Gastrocnemius medialis (tissue), 4 donors: ENCODE measurements at regions of chr3 and their contacts with region 1.

Region 1: DNA sequence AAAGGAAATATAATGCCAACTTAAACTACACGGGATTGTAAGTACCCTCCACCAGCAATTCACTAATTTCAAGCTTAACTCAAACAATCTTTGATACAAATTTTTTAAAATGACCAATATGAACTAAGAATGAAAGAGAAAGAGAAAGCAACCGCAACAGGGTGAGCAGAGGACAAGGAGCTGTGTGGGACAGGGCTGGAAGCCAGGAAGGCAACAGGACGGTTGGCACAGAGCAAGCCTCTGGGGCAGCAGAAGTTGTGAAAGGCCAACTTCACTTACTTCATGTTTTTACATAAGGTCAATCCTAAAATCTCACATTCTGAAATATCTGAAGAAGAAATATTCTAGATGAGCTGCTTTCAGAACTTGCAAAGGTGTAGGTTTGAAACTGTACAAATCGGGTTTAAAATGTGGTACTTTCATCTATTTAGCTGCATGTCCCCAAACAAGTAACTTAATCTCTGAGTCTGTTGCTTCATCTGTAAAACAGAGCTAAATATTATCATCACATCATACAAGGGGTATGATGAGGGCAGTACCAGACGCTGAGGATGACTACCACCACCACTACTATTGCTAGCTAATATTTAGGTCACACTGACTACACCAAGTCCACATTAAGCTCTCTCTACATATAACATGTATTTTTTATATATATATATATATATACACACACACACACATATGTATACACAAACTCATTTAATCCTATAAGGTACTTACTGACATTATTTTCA is 101.7 kb downstream of the IGSF11 start:
- DNase-seq: peak; percentile 65 to 91
- ATAC-seq: peak; percentile 93 to 96
- H3K4me3 ChIP-seq: peak overlapping the region; percentile 31 to 56 (median 50)
- H3K27ac ChIP-seq: peak overlapping the region; percentile 83 to 91 (median 89)
- H3K4me1 ChIP-seq: peaks cover 44 to 46% of the 10 kb centered on the region in 2 donors
- H3K27me3 ChIP-seq: no peaks in the 10 kb centered on the region
- CTCF ChIP-seq: no peak
- POLR2A ChIP-seq: peak in 1 of 2 donors; percentile 51

Region 2: DNA sequence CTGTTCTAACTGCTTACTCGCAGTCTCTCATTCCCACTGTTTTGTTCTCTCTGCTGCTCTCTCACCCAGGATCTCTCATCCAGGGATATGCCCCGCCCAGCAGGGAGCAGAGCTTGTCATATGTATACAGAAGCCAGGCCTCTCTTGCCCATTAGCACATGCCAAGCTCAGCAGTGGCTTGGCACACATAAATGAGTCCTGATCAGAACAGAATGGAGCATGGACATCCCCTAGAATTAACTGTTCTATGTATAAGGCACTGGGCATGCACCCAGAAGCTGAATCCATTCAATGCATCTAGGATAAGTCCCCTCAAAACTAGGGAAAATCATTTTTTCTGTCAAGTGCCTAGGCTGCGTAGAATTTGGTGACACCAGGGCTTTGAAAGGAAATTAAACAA is 40.1 kb after region 1 on chr3:
- in situ Hi-C with region 1: no loop called
- intact Hi-C with region 1: loop called (anchors 5 kb)
- DNase-seq: no peak
- ATAC-seq: peak in 1 of 2 donors; percentile 25
- H3K4me3 ChIP-seq: no peak overlapping the region
- H3K27ac ChIP-seq: no peak overlapping the region
- H3K4me1 ChIP-seq: peaks cover 20 to 25% of the 10 kb centered on the region in 2 donors
- H3K27me3 ChIP-seq: no peaks in the 10 kb centered on the region
- CTCF ChIP-seq: no peak
- POLR2A ChIP-seq: no peak

Region 3: GRCh38 chr3:119018690-119019463 is 85.9 kb after region 1 on chr3:
- in situ Hi-C with region 1: no loop called
- intact Hi-C with region 1: loop called (anchors 5 kb)
- DNase-seq: peak; percentile 30 to 67
- ATAC-seq: peak; percentile 92 to 96
- H3K4me3 ChIP-seq: no peak overlapping the region
- H3K27ac ChIP-seq: peak overlapping the region; percentile 0 to 49 (median 14)
- H3K4me1 ChIP-seq: peaks cover 4 to 5% of the 10 kb centered on the region in 2 donors
- H3K27me3 ChIP-seq: no peaks in the 10 kb centered on the region
- CTCF ChIP-seq: no peak
- POLR2A ChIP-seq: no peak

Region 4: DNA sequence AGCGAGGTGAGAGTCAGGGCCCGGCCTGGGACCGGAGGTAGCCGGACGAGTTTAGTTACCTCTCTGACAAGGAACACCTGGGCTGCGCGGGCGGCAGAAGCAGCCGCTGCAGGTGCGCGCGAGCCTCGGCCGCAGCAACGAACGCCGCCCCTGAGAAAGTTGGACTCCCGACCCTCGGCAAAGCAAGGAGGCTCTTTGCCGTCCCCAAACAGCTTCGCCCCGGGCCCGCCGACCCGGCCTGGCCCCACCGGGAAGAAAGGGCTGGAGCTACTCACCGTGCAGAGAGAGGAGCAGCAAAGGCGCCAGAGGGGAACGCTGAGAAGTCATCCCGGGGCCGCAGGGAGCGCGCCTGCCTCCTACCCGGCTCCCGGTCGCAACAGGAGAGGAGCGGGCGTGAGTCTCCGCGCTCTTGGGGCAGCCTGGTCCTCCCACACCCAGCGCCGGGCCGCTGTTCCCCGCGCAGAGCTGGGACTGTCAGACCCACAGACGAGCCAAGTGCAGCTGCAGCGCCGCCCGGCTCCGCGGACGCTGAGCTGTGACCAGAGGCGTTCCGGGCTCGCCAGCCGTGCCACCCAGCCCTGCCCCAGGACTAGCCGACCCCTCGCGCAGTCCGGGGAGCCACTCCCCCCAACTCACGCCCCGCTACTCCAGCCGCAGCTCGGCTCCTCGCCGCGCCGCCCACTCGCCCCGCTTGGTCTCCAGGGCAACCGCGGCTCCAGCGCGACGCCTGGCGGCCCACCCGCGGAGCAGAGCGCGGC is 101.4 kb after region 1 on chr3 and contains the start of gene IGSF11:
- in situ Hi-C with region 1: no loop called
- intact Hi-C with region 1: loop called (anchors 2 kb)
- DNase-seq: peak; percentile 16 to 71
- ATAC-seq: peak; percentile 92 to 94
- H3K4me3 ChIP-seq: peak within 1 kb of the TSS; percentile 68 to 76 (median 72)
- H3K27ac ChIP-seq: peak within 1 kb of the TSS; percentile 63 to 77 (median 68)
- H3K4me1 ChIP-seq: peaks cover 0 to 5% of the 10 kb centered on the region in 2 donors
- H3K27me3 ChIP-seq: peaks cover 0 to 2% (median 0%) of the 10 kb centered on the region in 3 donors
- CTCF ChIP-seq: peak in 4 of 5 experiments; percentile 77 to 86 (median 82)
- POLR2A ChIP-seq: peak in 1 of 2 donors; percentile 39
- total RNA-seq, gene IGSF11: 4.7 to 11.5 (median 8.6) TPM

Region 5: GRCh38 chr3:119257682-119258410 is 324.9 kb after region 1 on chr3:
- in situ Hi-C with region 1: no loop called
- intact Hi-C with region 1: no loop called
- DNase-seq: no peak
- ATAC-seq: no peak
- H3K4me3 ChIP-seq: no peak overlapping the region
- H3K27ac ChIP-seq: no peak overlapping the region
- H3K4me1 ChIP-seq: no peaks in the 10 kb centered on the region
- H3K27me3 ChIP-seq: peaks cover 0 to 3% (median 3%) of the 10 kb centered on the region in 3 donors
- CTCF ChIP-seq: no peak
- POLR2A ChIP-seq: no peak